ENCODE measurements at regions of chr16 and their contacts with region 1.

Region 1: DNA sequence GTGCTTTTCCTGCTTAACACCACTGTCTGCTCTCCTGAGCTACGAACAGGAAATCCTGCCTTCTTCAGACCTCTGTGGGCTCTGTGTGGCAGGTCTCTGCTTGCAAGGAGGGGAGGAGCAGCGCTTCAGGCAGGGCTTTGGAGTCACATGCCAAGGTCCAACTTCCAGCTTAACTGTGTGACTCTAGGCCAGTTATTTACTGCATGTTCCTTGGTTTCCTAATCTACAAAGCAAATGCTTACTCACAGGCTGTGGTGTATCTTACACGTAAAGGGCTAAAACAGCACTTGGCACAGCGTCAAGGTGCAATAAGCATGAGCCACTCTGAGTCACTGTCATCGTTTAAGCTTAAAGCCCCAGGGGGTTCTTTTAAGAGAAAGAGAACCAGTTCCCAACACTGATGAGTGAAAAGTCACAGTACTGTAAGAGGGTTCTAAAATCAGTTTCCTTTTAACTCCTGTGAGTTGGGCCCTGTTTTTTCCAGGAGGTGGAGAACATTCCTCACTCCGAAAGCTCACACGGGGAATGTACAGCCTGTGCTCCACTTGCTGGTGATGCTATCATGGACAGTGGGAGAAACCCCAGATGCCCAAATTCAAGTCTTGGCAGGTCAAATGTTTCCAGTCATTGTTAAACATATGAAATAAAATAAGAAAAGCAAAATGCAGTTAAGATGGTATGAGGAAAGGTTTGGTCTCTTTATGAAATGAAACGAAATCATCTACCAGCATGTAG is 54.1 kb upstream of the BCAR1 start:
- DNase-seq: peak; percentile 98
- H3K4me3 ChIP-seq: peak overlapping the region in 1 of 3 experiments; percentile 13
- H3K27ac ChIP-seq: peak overlapping the region; percentile 91
- H3K4me1 ChIP-seq: peaks cover 38% of the 10 kb centered on the region
- H3K27me3 ChIP-seq: no peaks in the 10 kb centered on the region
- CTCF ChIP-seq: no peak
- POLR2A ChIP-seq: no peak

Region 2: DNA sequence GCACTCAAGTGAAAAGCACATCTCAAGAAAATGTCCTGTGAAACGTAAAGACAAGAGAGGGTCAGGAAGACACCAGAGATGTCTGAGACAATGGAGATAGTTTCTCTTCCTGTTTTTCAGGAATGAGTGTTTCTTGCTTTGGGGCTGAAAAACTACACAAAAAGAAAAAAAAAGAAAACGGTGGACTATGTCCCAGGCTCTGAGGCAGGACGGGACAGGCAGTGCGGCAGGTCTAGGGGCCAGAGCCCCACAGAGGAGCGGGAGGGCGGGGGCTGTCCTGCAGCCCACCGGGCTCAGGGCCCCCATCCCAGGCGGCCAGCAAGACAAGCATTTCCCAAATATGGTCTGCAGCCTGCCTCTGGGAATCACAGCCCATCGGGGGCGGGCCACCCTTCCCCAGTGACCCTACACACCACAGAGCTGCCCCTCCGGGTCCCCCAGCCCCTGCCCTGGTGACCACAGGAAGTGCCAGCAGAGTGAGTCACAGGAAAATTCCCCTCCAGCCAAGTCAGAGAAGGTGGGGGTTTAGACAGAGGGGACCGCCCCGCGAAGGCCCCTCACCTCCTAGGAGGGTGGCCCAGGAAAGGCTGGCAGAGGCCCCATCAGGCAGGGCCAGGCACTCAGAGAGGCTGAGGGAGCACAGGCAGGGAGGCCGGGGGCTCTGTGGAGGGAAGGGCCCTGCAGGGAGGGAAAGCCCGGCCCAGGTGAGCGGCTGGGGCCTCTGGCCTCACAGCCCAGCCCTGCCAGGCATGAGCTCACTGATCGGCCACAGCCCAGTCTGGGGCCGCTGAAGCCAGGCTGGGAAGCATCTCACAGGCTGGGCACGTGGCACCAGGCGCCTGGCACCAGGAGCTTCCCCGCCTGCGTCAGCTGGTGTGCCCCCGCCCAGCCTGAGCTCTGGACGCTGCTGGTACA is 60.4 kb before region 1 on chr16:
- CTCF ChIA-PET with region 1: interaction called, 9 read pairs
- POLR2A ChIA-PET with region 1: interaction called, 9 read pairs
- dilution Hi-C with region 1: no loop called
- intact Hi-C with region 1: loop called (anchors 1 kb)
- DNase-seq: peak; percentile 94
- H3K4me3 ChIP-seq: peak overlapping the region in 1 of 3 experiments; percentile 5
- H3K27ac ChIP-seq: peak overlapping the region; percentile 92
- H3K4me1 ChIP-seq: peaks cover 66% of the 10 kb centered on the region
- H3K27me3 ChIP-seq: no peaks in the 10 kb centered on the region
- CTCF ChIP-seq: no peak
- POLR2A ChIP-seq: peak; percentile 74

Region 3: DNA sequence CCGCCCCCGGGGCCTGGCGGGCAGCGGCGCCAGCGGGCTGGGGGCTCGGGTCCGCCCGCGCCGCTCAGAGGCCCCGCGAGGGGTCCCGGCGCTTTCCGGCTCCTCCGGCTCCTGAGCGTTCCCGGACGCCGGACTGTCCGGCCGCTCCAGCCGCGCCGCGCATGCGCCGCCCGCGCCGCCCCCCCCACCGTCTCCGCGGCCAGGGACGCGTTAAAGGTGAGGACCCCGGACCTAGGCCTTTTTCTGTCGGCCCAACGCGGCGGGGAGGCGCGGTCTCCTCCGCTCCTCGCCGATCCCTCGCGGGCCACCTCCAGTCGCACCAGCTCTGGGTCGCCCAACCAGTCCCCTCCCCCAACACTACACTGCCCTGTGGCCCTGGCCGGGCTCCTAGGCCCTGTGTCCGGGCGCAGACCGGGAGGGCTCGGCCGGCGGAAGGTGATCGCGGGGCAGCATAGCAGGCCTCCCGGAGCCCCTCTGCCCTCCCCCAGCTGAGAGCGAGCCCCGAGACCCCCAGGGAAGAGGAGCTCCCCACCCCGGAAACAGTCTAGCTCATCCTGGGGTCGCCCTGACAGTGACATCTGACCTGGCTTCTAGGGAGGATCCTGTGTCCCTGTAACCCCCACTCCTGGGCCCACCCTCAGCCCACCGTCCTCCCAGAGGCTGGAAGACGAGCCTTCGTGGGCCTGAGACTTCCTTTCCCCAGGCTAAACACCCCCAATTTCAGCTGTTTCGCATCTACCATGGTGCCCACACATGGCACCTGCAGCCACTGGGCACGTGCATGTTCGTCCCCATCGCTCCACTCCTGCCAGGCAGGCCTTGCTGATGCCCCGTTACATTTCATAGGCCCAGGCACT is 39.5 kb before region 1 on chr16:
- CTCF ChIA-PET with region 1: interaction called, 3 read pairs
- POLR2A ChIA-PET with region 1: interaction called, 6 read pairs
- dilution Hi-C with region 1: no loop called
- intact Hi-C with region 1: loop called (anchors 1 kb)
- DNase-seq: peak; percentile 71
- H3K4me3 ChIP-seq: peak overlapping the region; percentile 82 to 89 (median 88)
- H3K27ac ChIP-seq: peak overlapping the region; percentile 93
- H3K4me1 ChIP-seq: peaks cover 46% of the 10 kb centered on the region
- H3K27me3 ChIP-seq: no peaks in the 10 kb centered on the region
- CTCF ChIP-seq: no peak
- POLR2A ChIP-seq: peak; percentile 69

Region 4: DNA sequence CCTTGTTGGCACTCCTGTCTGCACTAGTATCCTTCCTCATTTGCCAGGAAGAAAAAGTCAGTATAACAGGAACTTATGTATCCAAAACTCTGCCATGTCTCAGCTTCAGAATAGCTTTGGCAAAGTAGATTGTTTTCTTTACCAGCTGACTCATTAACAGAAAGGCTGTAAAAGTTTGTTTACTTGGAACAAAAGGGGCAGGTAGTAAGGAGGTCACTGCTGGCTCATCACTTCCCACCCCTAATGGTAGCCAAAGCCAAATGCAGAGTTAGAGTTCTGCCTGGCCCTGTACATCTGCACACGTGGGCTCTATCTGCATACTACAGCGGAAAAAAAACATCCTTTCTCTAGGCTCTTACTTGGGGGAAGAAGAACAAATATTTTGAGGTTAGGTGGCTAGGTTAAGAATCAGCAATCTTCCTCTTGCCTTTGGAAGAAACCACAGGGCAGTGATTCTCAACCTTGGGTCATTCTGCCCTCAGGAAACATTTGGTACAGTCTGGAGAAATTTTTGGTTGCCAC is 36.8 kb after region 1 on chr16:
- CTCF ChIA-PET with region 1: interaction called, 28 read pairs
- POLR2A ChIA-PET with region 1: interaction called, 22 read pairs
- dilution Hi-C with region 1: no loop called
- intact Hi-C with region 1: loop called (anchors 1 kb)
- DNase-seq: peak; percentile 99
- H3K4me3 ChIP-seq: no peak overlapping the region
- H3K27ac ChIP-seq: peak overlapping the region; percentile 100
- H3K4me1 ChIP-seq: peaks cover 58% of the 10 kb centered on the region
- H3K27me3 ChIP-seq: no peaks in the 10 kb centered on the region
- CTCF ChIP-seq: no peak
- POLR2A ChIP-seq: peak; percentile 55

Region 5: DNA sequence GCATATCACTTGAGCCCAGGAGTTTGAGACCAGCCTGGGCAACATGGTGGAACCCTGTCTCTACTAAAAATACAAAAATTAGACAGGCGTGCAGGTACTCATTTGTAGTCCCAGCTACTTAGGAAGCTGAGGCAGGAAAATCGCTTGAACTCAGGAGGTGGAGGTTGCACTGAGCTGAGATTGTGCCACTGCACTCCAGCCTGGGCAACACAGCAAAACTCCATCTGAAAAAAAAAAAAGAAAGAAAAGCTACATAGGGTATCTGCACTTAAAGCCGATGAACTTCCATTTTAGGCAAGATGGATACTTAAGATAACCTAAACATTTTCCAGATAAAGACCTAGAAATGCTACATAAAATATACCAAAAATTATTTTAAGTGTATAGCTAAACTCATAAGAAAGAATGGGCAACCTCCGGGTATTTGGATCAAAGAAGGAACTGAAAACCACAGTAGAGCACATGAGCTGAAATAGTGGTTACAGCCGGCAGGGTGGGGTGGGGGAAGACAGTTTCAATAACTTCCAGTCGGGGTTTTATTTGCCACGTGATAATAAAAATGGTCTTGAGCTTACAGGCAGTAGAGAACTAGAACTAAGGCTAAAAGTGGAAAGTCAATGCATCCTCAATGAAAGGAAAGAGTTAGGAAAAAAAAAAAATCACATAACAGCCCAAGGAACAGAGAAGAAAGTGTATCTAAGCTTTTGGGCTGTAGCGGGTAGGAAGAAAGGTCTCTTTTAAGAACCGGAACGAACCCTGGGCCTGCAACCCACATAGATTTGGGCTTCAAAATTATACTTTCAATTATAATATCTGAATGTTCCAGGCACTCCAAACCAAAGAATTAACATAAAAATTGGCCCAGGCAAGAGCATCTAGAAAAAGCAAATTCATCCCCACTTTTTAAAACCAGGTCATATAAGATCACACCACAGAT is 74.6 kb after region 1 on chr16:
- CTCF ChIA-PET with region 1: interaction called, 22 read pairs
- POLR2A ChIA-PET with region 1: interaction called, 3 read pairs
- dilution Hi-C with region 1: no loop called
- intact Hi-C with region 1: loop called (anchors 1 kb)
- DNase-seq: peak; percentile 17
- H3K4me3 ChIP-seq: no peak overlapping the region
- H3K27ac ChIP-seq: peak overlapping the region; percentile 59
- H3K4me1 ChIP-seq: peaks cover 55% of the 10 kb centered on the region
- H3K27me3 ChIP-seq: no peaks in the 10 kb centered on the region
- CTCF ChIP-seq: no peak
- POLR2A ChIP-seq: no peak

Measured in endothelial cell of umbilical vein (primary cell).